IMR-90 (cell line): ENCODE measurements at regions of chr1 and their contacts with region 1.

Region 1: DNA sequence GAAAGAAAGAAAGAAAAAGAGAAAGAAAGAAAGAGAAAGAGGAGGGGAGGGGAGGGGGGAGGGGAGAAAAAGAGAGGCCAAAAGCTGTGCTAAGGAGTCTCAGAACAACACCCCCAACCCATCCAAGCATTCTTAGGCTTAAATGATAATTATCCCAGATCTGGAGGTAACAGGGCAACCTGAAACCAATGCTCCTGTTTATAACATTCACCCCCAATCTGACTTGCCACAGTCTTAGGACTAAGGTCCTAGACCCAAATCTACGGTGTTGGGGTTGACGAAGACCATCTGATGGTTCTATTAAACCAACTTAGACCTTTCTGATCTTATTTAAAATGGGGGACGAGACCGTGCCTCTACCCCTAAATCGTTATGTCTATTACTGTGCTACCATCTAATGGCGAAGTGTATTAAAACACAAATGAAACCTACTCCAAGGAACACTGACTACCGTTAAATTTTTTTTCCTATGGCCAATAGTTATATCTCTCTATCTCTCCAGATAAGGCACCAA is 119.3 kb upstream of the CDC42BPA start:
- DNase-seq: peak; percentile 68
- ATAC-seq: peak; percentile 97
- H3K4me3 ChIP-seq: peak overlapping the region; percentile 84
- H3K27ac ChIP-seq: no peak overlapping the region
- H3K4me1 ChIP-seq: no peaks in the 10 kb centered on the region; the same call in 1 of the 2 replicates
- H3K27me3 ChIP-seq: peaks cover 10% of the 10 kb centered on the region; the same call in 1 of the 2 replicates
- CTCF ChIP-seq: peak; percentile 73
- POLR2A ChIP-seq: no peak
- RAD21 ChIP-seq: peak; percentile 84

Region 2: DNA sequence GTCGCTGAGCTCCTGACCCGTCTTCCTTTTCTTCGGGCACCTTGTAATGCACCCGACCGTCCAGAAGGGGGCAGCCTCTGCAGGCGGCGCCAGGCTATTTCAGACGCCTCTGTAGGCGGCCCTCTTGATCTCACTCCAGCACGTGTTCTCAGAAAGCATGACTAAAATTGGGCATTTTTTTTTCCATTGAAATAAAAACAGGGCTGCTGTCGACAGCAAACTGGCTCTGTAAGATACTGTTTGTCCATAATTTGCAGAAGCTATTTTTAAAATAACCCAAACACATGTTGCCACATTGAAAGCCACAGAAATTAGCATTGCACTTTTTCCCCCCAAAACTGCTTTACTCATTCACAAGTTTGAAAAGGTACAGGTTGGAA is 811.0 kb before region 1 on chr1:
- CTCF ChIA-PET with region 1: no interaction called
- POLR2A ChIA-PET with region 1: no interaction called
- dilution Hi-C with region 1: no loop called
- in situ Hi-C with region 1: loop called (anchors 10 kb)
- intact Hi-C with region 1: loop called (anchors 5 kb)
- DNase-seq: peak; percentile 59
- ATAC-seq: peak; percentile 98
- H3K4me3 ChIP-seq: no peak overlapping the region
- H3K27ac ChIP-seq: no peak overlapping the region
- H3K4me1 ChIP-seq: no peaks in the 10 kb centered on the region
- H3K27me3 ChIP-seq: peaks cover 1% of the 10 kb centered on the region
- CTCF ChIP-seq: peak; percentile 89
- POLR2A ChIP-seq: no peak
- RAD21 ChIP-seq: peak; percentile 78

Region 3: GRCh38 chr1:226827968-226828513 is 609.5 kb before region 1 on chr1:
- CTCF ChIA-PET with region 1: no interaction called
- POLR2A ChIA-PET with region 1: no interaction called
- dilution Hi-C with region 1: no loop called
- in situ Hi-C with region 1: loop called (anchors 10 kb)
- intact Hi-C with region 1: loop called (anchors 2 kb)
- DNase-seq: peak; percentile 93
- ATAC-seq: peak; percentile 100
- H3K4me3 ChIP-seq: no peak overlapping the region
- H3K27ac ChIP-seq: peak overlapping the region; percentile 76
- H3K4me1 ChIP-seq: peaks cover 2% of the 10 kb centered on the region
- H3K27me3 ChIP-seq: peaks cover 4% of the 10 kb centered on the region; the same call in 1 of the 2 replicates
- CTCF ChIP-seq: peak; percentile 97
- POLR2A ChIP-seq: peak; percentile 51; the same call in 1 of the 2 replicates
- RAD21 ChIP-seq: peak; percentile 98

Region 4: DNA sequence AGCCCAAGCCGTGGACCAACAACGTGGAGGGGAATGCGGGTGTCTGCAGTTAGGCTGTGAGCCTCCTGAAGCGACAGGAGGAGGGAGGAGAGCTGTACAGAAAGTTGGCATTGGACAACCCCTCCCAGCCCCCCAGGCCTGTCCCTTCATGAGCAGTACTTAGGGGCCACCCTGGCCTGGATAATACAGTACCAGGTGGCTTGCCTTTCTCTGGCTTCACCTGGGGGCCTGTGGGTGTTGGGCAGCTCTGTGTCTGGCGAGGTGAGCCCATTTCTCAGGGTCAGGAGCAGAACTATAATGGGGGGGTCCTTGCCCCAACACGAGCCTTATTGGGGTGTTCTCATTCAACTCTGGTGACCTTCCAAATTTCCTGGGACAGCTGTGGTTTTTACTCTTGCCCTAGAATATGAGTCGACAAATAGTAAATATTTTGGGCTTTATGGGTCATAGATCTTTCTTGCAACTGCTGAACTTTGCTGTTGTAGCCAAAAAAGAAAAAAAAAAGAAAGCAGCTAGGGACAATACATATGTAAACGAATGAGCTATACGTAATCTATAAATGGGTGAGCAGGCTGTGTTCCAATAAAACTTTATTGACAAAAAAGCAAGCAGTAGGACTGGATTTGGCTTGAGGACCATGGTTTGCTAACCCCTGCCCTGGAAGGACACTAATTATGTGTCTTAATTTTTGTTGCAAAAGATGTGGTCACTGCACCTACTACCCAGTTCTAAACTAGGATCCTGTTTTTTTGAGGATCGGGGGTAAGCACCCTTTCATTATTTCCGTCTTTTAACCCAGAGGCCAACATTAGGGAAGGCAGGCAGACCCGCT is 486.1 kb before region 1 on chr1:
- CTCF ChIA-PET with region 1: no interaction called
- POLR2A ChIA-PET with region 1: no interaction called
- dilution Hi-C with region 1: no loop called
- in situ Hi-C with region 1: no loop called
- intact Hi-C with region 1: no loop called
- DNase-seq: no peak
- ATAC-seq: no peak
- H3K4me3 ChIP-seq: no peak overlapping the region
- H3K27ac ChIP-seq: no peak overlapping the region
- H3K4me1 ChIP-seq: peaks cover 6% of the 10 kb centered on the region; the same call in 1 of the 2 replicates
- H3K27me3 ChIP-seq: no peaks in the 10 kb centered on the region
- CTCF ChIP-seq: no peak
- POLR2A ChIP-seq: no peak
- RAD21 ChIP-seq: no peak

Region 5: GRCh38 chr1:226990133-226990716 is 447.3 kb before region 1 on chr1:
- CTCF ChIA-PET with region 1: no interaction called
- POLR2A ChIA-PET with region 1: no interaction called
- dilution Hi-C with region 1: no loop called
- in situ Hi-C with region 1: no loop called
- intact Hi-C with region 1: loop called (anchors 5 kb)
- DNase-seq: no peak
- ATAC-seq: no peak
- H3K4me3 ChIP-seq: no peak overlapping the region
- H3K27ac ChIP-seq: no peak overlapping the region
- H3K4me1 ChIP-seq: no peaks in the 10 kb centered on the region; the same call in 1 of the 2 replicates
- H3K27me3 ChIP-seq: no peaks in the 10 kb centered on the region
- CTCF ChIP-seq: no peak
- POLR2A ChIP-seq: no peak
- RAD21 ChIP-seq: no peak

Region 6: GRCh38 chr1:227038401-227038800 is 399.2 kb before region 1 on chr1:
- CTCF ChIA-PET with region 1: no interaction called
- POLR2A ChIA-PET with region 1: no interaction called
- dilution Hi-C with region 1: no loop called
- in situ Hi-C with region 1: no loop called
- intact Hi-C with region 1: loop called (anchors 10 kb)
- DNase-seq: no peak
- ATAC-seq: no peak
- H3K4me3 ChIP-seq: no peak overlapping the region
- H3K27ac ChIP-seq: no peak overlapping the region
- H3K4me1 ChIP-seq: no peaks in the 10 kb centered on the region
- H3K27me3 ChIP-seq: no peaks in the 10 kb centered on the region
- CTCF ChIP-seq: no peak
- POLR2A ChIP-seq: no peak
- RAD21 ChIP-seq: no peak

Region 7: GRCh38 chr1:227234998-227235405 is 202.6 kb before region 1 on chr1:
- CTCF ChIA-PET with region 1: interaction called, 3 read pairs
- POLR2A ChIA-PET with region 1: no interaction called
- dilution Hi-C with region 1: no loop called
- in situ Hi-C with region 1: loop called (anchors 25 kb)
- intact Hi-C with region 1: loop called (anchors 1 kb)
- DNase-seq: peak; percentile 73
- ATAC-seq: peak; percentile 85
- H3K4me3 ChIP-seq: no peak overlapping the region
- H3K27ac ChIP-seq: no peak overlapping the region
- H3K4me1 ChIP-seq: no peaks in the 10 kb centered on the region
- H3K27me3 ChIP-seq: no peaks in the 10 kb centered on the region
- CTCF ChIP-seq: peak; percentile 52
- POLR2A ChIP-seq: no peak
- RAD21 ChIP-seq: peak; percentile 52

Region 8: GRCh38 chr1:227411066-227411465 is 26.5 kb before region 1 on chr1:
- CTCF ChIA-PET with region 1: no interaction called
- POLR2A ChIA-PET with region 1: no interaction called
- dilution Hi-C with region 1: no loop called
- in situ Hi-C with region 1: no loop called
- intact Hi-C with region 1: no loop called
- DNase-seq: peak; percentile 24
- ATAC-seq: no peak
- H3K4me3 ChIP-seq: no peak overlapping the region
- H3K27ac ChIP-seq: no peak overlapping the region
- H3K4me1 ChIP-seq: 0 out of 2 replicates have a peak, but pooled peaks cover 1% of the 10 kb centered on the region
- H3K27me3 ChIP-seq: peaks cover 3% of the 10 kb centered on the region
- CTCF ChIP-seq: no peak
- POLR2A ChIP-seq: no peak
- RAD21 ChIP-seq: no peak

Region 9: GRCh38 chr1:228487336-228488124 is 1050.0 kb after region 1 on chr1 and contains the start of gene RNF187:
- CTCF ChIA-PET with region 1: no interaction called
- POLR2A ChIA-PET with region 1: no interaction called
- dilution Hi-C with region 1: no loop called
- in situ Hi-C with region 1: no loop called
- intact Hi-C with region 1: no loop called
- DNase-seq: peak; percentile 18
- ATAC-seq: peak; percentile 86
- H3K4me3 ChIP-seq: peak within 1 kb of the TSS; percentile 70
- H3K27ac ChIP-seq: peak within 1 kb of the TSS; percentile 97
- H3K4me1 ChIP-seq: peaks cover 18% of the 10 kb centered on the region
- H3K27me3 ChIP-seq: no peaks in the 10 kb centered on the region
- CTCF ChIP-seq: no peak
- POLR2A ChIP-seq: no peak
- RAD21 ChIP-seq: no peak
- total RNA-seq, gene RNF187: 13.6 and 14.0 TPM in 2 replicates